ENCODE measurements at regions of chr10 and their contacts with region 1.

Region 1: DNA sequence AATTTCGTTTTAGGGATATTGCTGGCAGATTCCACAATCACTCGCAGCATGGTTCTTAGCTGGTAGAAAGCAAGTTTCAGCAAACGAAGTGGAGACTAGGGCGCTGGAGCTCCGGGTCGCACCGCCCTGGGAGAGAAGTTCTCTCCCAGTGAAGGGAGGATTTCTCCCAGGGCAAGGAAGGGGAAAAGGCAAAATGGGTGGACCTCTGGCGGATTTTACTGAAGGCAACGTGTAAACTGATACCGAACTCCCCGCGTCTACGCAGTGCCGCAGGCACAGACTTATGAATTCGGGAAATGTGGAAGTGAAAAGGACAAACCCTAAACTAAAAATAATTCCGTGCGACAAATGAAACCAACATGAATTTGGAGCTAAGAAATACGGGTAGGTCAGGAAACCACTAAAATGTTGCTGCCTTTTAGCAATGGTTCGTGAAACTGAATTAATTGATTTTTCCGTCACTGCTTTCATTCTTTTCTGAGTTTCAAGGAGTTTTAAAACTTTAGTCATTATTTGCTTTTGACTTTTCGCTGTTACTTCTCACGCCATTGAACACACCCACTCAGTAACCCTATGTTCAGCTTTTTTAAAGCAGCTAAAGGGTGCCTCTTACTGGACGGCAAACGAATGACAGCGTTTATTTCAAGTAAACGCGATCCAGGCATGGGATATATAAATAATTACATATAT is at the start of gene MYOF:
- DNase-seq: peak; percentile 71
- ATAC-seq: peak; percentile 90
- H3K4me3 Mint-ChIP-seq: peak within 1 kb of the TSS; percentile 75
- H3K27ac Mint-ChIP-seq: peak within 1 kb of the TSS; percentile 87
- H3K4me1 Mint-ChIP-seq: peaks cover 18% of the 10 kb centered on the region
- H3K27me3 Mint-ChIP-seq: peaks cover 18% of the 10 kb centered on the region
- CTCF ChIP-seq: peak; percentile 70
- total RNA-seq, gene MYOF: 4.9 to 5.4 TPM

Region 2: GRCh38 chr10:93352638-93353383 is 129.5 kb before region 1 on chr10:
- CTCF ChIA-PET with region 1: interaction called, 27 read pairs
- POLR2A ChIA-PET with region 1: no interaction called
- intact Hi-C with region 1: no loop called
- DNase-seq: no peak
- ATAC-seq: no peak
- H3K4me3 Mint-ChIP-seq: no peak overlapping the region
- H3K27ac Mint-ChIP-seq: no peak overlapping the region
- H3K4me1 Mint-ChIP-seq: peaks cover 4% of the 10 kb centered on the region
- H3K27me3 Mint-ChIP-seq: peaks cover 13% of the 10 kb centered on the region
- CTCF ChIP-seq: peak; percentile 86

Region 3: GRCh38 chr10:93392121-93392520 is 90.2 kb before region 1 on chr10:
- CTCF ChIA-PET with region 1: interaction called, 595 read pairs
- POLR2A ChIA-PET with region 1: no interaction called
- intact Hi-C with region 1: no loop called
- DNase-seq: no peak
- ATAC-seq: no peak
- H3K4me3 Mint-ChIP-seq: no peak overlapping the region
- H3K27ac Mint-ChIP-seq: no peak overlapping the region
- H3K4me1 Mint-ChIP-seq: peaks cover 4% of the 10 kb centered on the region
- H3K27me3 Mint-ChIP-seq: no peaks in the 10 kb centered on the region
- CTCF ChIP-seq: no peak

Region 4: GRCh38 chr10:93451244-93451947 is 30.9 kb before region 1 on chr10:
- CTCF ChIA-PET with region 1: no interaction called
- POLR2A ChIA-PET with region 1: no interaction called
- intact Hi-C with region 1: no loop called
- DNase-seq: no peak
- ATAC-seq: no peak
- H3K4me3 Mint-ChIP-seq: no peak overlapping the region
- H3K27ac Mint-ChIP-seq: no peak overlapping the region
- H3K4me1 Mint-ChIP-seq: peaks cover 12% of the 10 kb centered on the region
- H3K27me3 Mint-ChIP-seq: no peaks in the 10 kb centered on the region
- CTCF ChIP-seq: no peak

Region 5: DNA sequence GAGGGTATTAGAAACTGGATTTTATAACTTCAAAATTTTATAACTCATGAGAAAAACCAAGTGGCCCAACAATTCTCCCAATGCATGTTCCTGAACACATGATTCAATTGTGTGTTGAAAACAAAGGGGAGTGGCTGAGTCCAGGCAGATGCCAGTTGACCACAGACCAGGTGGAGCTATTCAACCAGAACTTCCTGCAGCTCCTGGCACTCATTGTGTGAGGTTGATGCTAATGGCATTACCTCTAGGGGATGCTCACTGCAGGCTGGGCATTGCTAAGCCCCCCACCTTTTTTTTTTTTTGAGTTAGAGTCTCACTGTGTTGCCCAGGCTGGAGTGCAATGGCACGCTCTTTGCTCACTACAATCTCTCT is 20.5 kb before region 1 on chr10:
- CTCF ChIA-PET with region 1: interaction called, 18 read pairs
- POLR2A ChIA-PET with region 1: no interaction called
- intact Hi-C with region 1: no loop called
- DNase-seq: no peak
- ATAC-seq: no peak
- H3K4me3 Mint-ChIP-seq: no peak overlapping the region
- H3K27ac Mint-ChIP-seq: no peak overlapping the region
- H3K4me1 Mint-ChIP-seq: peaks cover 8% of the 10 kb centered on the region
- H3K27me3 Mint-ChIP-seq: peaks cover 2% of the 10 kb centered on the region
- CTCF ChIP-seq: no peak

Region 6: DNA sequence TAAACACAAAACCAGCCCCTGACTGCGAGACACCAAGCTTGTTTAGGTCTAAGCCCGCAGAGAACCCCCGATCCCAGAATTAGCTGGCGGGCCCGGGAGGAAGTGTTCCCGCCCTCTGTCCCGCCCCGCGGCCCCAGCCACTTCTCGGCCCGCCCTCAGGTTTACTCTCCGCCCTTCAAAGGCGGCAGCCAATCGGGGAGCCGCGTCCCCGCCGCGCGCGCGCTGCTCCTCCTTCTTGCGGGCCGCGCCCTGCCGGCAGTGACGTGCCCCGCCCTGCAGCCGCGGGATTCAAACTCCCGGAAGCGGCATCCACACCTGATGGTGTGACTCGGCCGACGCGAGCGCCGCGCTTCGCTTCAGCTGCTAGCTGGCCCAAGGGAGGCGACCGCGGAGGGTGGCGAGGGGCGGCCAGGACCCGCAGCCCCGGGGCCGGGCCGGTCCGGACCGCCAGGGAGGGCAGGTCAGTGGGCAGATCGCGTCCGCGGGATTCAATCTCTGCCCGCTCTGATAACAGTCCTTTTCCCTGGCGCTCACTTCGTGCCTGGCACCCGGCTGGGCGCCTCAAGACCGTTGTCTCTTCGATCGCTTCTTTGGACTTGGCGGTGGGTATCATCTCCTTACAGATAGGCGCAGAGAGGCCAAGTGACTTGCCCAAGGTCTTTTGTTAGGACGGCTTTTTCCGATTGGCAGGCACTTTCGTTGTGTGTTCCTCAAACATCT is 14.2 kb after region 1 on chr10 and contains the start of gene CEP55:
- CTCF ChIA-PET with region 1: interaction called, 34 read pairs
- POLR2A ChIA-PET with region 1: interaction called, 14 read pairs
- intact Hi-C with region 1: no loop called
- DNase-seq: peak; percentile 95
- ATAC-seq: peak; percentile 99
- H3K4me3 Mint-ChIP-seq: peak within 1 kb of the TSS; percentile 82
- H3K27ac Mint-ChIP-seq: peak within 1 kb of the TSS; percentile 73
- H3K4me1 Mint-ChIP-seq: peaks cover 13% of the 10 kb centered on the region
- H3K27me3 Mint-ChIP-seq: peaks cover 7% of the 10 kb centered on the region
- CTCF ChIP-seq: no peak
- total RNA-seq, gene CEP55: 44.6 to 45.0 TPM

Region 7: GRCh38 chr10:93512565-93512964 is 30.3 kb after region 1 on chr10:
- CTCF ChIA-PET with region 1: interaction called, 64 read pairs
- POLR2A ChIA-PET with region 1: no interaction called
- intact Hi-C with region 1: no loop called
- DNase-seq: no peak
- ATAC-seq: no peak
- H3K4me3 Mint-ChIP-seq: no peak overlapping the region
- H3K27ac Mint-ChIP-seq: no peak overlapping the region
- H3K4me1 Mint-ChIP-seq: peaks cover 4% of the 10 kb centered on the region
- H3K27me3 Mint-ChIP-seq: no peaks in the 10 kb centered on the region
- CTCF ChIP-seq: no peak

Measured in activated CD8-positive, alpha-beta T cell treated with anti-CD3 and anti-CD28 coated beads for 36 hours (primary cell).